Spleen (tissue), 13 donors: ENCODE measurements at regions of chr9 and their contacts with region 1.

Region 1: GRCh38 chr9:96327694-96328352 is 25.8 kb upstream of the HSD17B3 start:
- DNase-seq: no peak
- H3K4me3 ChIP-seq: no peak overlapping the region
- H3K27ac ChIP-seq: no peak overlapping the region
- H3K4me1 ChIP-seq: peaks cover 0 to 2% (median 0%) of the 10 kb centered on the region in 6 donors
- H3K27me3 ChIP-seq: no peaks in the 10 kb centered on the region
- CTCF ChIP-seq: peak; percentile 68 to 89 (median 85)
- POLR2A ChIP-seq: no peak

Region 2: GRCh38 chr9:96061293-96061987 is 266.4 kb before region 1 on chr9:
- intact Hi-C with region 1: no loop called
- DNase-seq: no peak
- H3K4me3 ChIP-seq: no peak overlapping the region
- H3K27ac ChIP-seq: peak overlapping the region in 6 of 8 donors; percentile 19 to 76 (median 66)
- H3K4me1 ChIP-seq: peaks cover 0 to 17% (median 10%) of the 10 kb centered on the region in 6 donors
- H3K27me3 ChIP-seq: no peaks in the 10 kb centered on the region
- CTCF ChIP-seq: peak in 8 of 11 experiments; percentile 23 to 58 (median 40)
- POLR2A ChIP-seq: no peak

Region 3: DNA sequence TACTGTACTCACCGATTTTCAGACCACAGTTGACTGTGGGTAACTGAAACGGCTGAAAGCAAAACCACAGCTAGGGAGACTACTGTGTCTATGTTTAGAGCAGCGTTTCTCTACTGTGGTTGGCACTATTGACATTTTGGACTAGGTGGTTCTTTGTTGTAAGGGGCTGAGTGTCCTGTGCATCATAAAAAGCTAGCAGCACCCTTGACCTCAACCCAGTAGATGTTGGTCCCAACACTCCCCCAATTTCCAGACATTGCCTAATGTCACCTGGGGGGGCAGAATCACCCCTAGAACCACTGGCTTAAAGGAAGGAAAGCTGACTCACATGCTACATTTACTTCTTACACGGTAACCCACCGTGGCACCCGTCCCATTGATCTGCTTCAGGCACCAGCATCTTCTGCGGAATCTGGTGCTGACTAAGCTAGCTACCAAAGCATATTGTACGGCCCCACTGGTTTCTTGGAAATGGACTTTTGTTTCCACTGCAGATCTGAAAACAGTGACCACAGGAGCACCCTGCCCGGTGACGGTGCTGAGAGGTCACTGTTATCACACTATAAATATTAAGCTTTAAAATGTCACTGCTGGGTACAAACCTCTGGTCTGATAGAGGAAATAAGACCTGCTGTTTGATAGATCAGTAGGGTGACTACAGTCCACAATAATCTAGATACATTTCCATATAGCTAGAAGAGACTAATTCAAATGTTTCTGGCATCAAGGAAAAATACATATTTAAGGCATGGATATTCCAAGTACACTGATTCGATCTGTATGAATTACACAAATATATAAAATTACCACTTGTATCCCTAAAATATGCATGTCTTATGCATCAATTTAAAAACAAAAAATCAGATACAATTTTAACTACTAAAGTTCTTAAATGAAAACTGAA is 177.2 kb before region 1 on chr9:
- intact Hi-C with region 1: no loop called
- DNase-seq: no peak
- H3K4me3 ChIP-seq: peak overlapping the region in 1 of 8 donors; percentile 43
- H3K27ac ChIP-seq: peak overlapping the region in 2 of 8 donors; percentile 18 to 48
- H3K4me1 ChIP-seq: peaks cover 0 to 30% (median 8%) of the 10 kb centered on the region in 6 donors
- H3K27me3 ChIP-seq: peaks cover 0 to 18% (median 0%) of the 10 kb centered on the region in 7 donors
- CTCF ChIP-seq: no peak
- POLR2A ChIP-seq: no peak

Region 4: DNA sequence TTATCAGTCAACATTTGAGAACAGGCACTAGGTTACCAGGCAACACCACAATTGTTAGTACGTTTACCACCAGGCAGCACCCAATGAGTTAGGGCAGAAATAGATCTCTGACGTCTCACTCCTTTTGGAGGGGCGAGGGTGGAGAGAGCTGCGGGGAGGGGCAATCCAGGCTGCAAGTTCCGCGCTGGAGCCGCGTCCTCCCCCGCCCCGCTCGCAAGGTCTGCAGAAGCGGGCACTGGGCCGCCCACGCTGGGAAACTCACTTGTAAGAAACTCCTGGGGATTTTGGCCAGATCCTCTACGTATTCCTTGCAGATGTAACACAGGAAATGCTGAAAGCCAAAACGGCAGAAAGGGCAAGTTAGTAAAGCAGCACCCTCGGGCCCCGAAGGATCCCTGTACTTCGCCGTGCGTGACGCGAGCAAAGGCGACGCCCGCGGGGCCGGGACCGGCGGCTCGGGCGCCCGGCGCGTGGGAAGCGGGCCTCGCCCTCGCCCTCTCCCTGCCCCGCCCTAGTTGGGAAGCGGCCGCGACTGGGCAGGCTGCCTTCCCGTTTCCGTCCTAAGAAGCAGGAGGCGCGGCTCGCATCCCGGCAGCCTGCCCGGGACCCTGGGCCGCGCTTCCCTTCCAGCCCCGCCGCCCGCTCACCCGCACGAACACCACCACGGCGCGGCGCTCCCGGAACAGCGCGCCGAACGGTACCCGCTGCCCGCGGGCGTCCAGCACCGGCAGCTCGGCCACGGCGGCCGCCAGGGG is 326.8 kb after region 1 on chr9:
- intact Hi-C with region 1: loop called (anchors 5 kb)
- DNase-seq: peak; percentile 91
- H3K4me3 ChIP-seq: peak overlapping the region; percentile 57 to 91 (median 67)
- H3K27ac ChIP-seq: peak overlapping the region; percentile 90 to 96 (median 92)
- H3K4me1 ChIP-seq: peaks cover 0 to 33% (median 21%) of the 10 kb centered on the region in 6 donors
- H3K27me3 ChIP-seq: no peaks in the 10 kb centered on the region
- CTCF ChIP-seq: peak in 3 of 11 experiments; percentile 7 to 27 (median 22)
- POLR2A ChIP-seq: no peak

Region 5: DNA sequence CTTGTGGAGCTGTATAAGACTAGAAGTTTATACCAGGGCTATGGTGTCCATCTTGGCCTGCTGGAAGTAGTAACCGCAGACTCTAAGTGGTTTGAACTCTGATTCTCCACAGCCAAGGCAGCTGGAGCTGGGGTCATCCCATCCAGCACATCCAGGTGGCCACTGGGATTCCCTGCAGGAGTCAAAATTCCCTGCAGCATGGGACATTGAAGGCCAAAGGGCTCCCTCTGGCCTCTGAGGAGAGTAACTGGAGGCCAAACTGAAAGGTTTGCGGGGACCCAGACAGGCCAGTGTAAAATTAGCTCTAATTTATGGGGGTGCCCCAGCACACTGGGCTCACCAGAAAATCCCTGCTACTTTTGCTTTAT is 339.5 kb after region 1 on chr9:
- intact Hi-C with region 1: loop called (anchors 5 kb)
- DNase-seq: no peak
- H3K4me3 ChIP-seq: no peak overlapping the region
- H3K27ac ChIP-seq: no peak overlapping the region
- H3K4me1 ChIP-seq: peaks cover 0 to 4% (median 0%) of the 10 kb centered on the region in 6 donors
- H3K27me3 ChIP-seq: peaks cover 0 to 9% (median 0%) of the 10 kb centered on the region in 7 donors
- CTCF ChIP-seq: no peak
- POLR2A ChIP-seq: no peak

Region 6: DNA sequence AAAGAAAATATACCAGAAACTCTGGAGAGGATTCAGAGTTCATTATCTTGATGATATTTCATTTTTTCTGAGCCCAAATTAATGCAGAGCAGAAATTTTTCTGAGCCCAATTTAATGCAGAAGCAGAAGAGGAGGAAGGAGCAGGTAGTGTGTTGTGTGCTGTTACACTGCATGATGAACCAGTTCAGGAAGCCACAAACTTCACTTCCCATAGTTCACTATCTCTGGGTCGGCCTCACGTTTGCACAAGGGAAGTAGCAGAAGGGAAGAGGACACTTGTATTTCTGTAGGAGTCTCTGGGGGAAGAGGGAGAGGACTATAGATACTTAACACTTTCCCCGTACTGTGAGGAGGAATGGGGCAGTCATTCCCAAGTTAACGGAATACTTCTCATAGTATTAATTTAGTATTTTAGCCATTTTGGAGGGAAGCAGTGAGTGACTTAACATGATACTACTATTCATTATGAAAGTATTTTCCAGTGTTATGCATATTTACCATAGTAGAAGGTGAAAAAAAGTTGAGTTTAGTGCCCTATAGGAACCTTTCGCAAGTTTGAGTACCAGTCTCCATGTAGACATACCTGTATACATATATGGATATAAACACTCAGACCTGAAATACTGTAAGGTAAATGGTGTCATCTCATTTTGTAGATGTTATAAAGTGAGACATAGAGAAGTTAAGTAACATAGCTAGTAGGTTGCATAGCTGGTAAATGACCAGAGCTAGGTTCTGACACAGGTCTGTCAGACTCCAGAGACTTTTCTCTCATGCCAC is 1339.3 kb after region 1 on chr9:
- intact Hi-C with region 1: no loop called
- DNase-seq: no peak
- H3K4me3 ChIP-seq: no peak overlapping the region
- H3K27ac ChIP-seq: peak overlapping the region in 2 of 8 donors; percentile 19 to 28
- H3K4me1 ChIP-seq: peaks cover 0 to 15% (median 5%) of the 10 kb centered on the region in 6 donors
- H3K27me3 ChIP-seq: no peaks in the 10 kb centered on the region
- CTCF ChIP-seq: no peak
- POLR2A ChIP-seq: no peak